ENCODE measurements at regions of chr17 and their contacts with region 1.

Region 1: GRCh38 chr17:73569762-73570319 is 74.4 kb downstream of the SDK2 start:
- DNase-seq: no peak
- ATAC-seq: no peak
- H3K4me3 ChIP-seq: no peak overlapping the region
- H3K27ac ChIP-seq: no peak overlapping the region
- H3K4me1 ChIP-seq: peaks cover 6% of the 10 kb centered on the region; the same call in 1 of the 2 replicates
- H3K27me3 ChIP-seq: no peaks in the 10 kb centered on the region
- CTCF ChIP-seq: no peak
- EP300 ChIP-seq: no peak
- POLR2A ChIP-seq: no peak
- RAD21 ChIP-seq: no peak

Region 2: GRCh38 chr17:72778169-72779151 is 791.4 kb before region 1 on chr17:
- CTCF ChIA-PET with region 1: no interaction called
- POLR2A ChIA-PET with region 1: interaction called, 13 read pairs
- RAD21 ChIA-PET with region 1: no interaction called
- SMC1A ChIA-PET with region 1: no interaction called
- in situ Hi-C with region 1: no loop called
- intact Hi-C with region 1: no loop called
- DNase-seq: no peak
- ATAC-seq: no peak
- H3K4me3 ChIP-seq: no peak overlapping the region
- H3K27ac ChIP-seq: no peak overlapping the region
- H3K4me1 ChIP-seq: no peaks in the 10 kb centered on the region
- H3K27me3 ChIP-seq: no peaks in the 10 kb centered on the region
- CTCF ChIP-seq: no peak
- EP300 ChIP-seq: no peak
- POLR2A ChIP-seq: no peak
- RAD21 ChIP-seq: no peak

Region 3: GRCh38 chr17:73549911-73550310 is 19.9 kb before region 1 on chr17:
- CTCF ChIA-PET with region 1: no interaction called
- POLR2A ChIA-PET with region 1: no interaction called
- RAD21 ChIA-PET with region 1: no interaction called
- SMC1A ChIA-PET with region 1: no interaction called
- in situ Hi-C with region 1: no loop called
- intact Hi-C with region 1: no loop called
- DNase-seq: no peak
- ATAC-seq: no peak
- H3K4me3 ChIP-seq: no peak overlapping the region
- H3K27ac ChIP-seq: no peak overlapping the region
- H3K4me1 ChIP-seq: no peaks in the 10 kb centered on the region
- H3K27me3 ChIP-seq: peaks cover 0 to 3% of the 10 kb centered on the region in 2 experiments; a peak in 2 of 4 replicates
- CTCF ChIP-seq: no peak
- EP300 ChIP-seq: no peak
- POLR2A ChIP-seq: no peak
- RAD21 ChIP-seq: no peak

Region 4: DNA sequence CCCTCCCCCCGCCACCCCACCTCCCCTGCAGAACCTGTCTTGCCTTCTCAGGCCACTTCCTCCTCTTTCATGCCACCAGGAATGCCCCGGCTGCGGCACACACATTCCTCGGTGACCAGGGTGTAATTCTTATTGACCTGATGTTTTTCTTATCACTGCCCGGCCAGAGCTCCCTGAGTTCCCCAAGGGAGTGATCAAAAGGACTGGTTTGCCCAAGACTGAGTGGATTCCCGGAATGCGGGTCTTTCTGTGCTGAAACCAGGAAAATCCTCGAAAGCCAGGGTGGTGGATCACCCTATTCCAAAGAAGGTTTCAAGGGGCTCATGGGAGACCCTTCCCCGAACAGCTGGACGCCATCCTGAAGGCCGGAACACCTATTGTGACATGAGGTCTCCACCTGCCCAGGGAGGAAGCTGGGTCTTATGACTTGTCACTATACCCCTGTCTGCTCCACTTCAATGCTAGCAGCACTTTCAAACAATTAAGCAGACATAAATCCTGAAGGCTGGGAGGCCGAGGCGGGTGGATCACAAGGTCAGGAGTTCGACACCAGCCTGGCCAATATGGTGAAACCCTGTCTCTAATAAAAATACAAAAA is 580.7 kb after region 1 on chr17:
- CTCF ChIA-PET with region 1: no interaction called
- POLR2A ChIA-PET with region 1: no interaction called
- RAD21 ChIA-PET with region 1: no interaction called
- SMC1A ChIA-PET with region 1: no interaction called
- in situ Hi-C with region 1: no loop called
- intact Hi-C with region 1: no loop called
- DNase-seq: no peak
- ATAC-seq: no peak
- H3K4me3 ChIP-seq: no peak overlapping the region
- H3K27ac ChIP-seq: no peak overlapping the region
- H3K4me1 ChIP-seq: no peaks in the 10 kb centered on the region
- H3K27me3 ChIP-seq: no peaks in the 10 kb centered on the region; a peak in 1 of 4 replicates
- CTCF ChIP-seq: no peak
- EP300 ChIP-seq: no peak
- POLR2A ChIP-seq: no peak
- RAD21 ChIP-seq: no peak